ENCODE measurements at regions of chr18 and their contacts with region 1.

Region 1: DNA sequence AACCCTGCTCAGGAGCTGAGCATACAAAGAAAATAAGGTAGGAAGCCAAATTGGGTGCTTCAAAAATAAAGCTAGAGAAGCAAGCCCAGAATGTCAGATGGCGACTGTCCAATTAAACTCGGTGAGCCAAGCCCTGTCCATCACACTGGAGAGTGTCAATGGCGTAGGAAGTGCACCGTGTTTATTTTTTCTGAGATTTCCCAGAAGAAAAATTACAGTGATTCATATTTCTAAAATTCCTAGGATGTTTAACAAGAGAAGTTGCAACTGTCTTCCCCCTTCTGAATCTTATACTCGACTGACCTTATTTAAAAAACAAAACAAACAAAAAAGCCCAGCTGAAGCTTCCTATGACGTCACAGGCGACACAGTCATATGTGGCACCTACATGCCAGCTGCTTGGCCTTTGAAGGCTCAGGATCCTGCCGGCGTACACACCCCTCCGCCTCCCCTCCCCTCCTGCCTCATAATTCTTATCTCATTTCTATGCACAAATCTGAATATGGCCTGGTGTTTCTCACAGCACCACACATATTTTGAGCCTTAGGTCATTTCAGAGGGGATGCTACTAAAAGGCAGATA is 60.8 kb downstream of the MBP start:
- DNase-seq: no peak
- H3K4me3 ChIP-seq: no peak overlapping the region
- H3K27ac ChIP-seq: peak overlapping the region; percentile 10 to 27
- H3K4me1 ChIP-seq: no peaks in the 10 kb centered on the region
- H3K27me3 ChIP-seq: no peaks in the 10 kb centered on the region
- CTCF ChIP-seq: no peak
- POLR2A ChIP-seq: no peak

Region 2: GRCh38 chr18:77030201-77030600 is 41.6 kb before region 1 on chr18:
- intact Hi-C with region 1: loop called (anchors 1 kb)
- DNase-seq: no peak
- H3K4me3 ChIP-seq: no peak overlapping the region
- H3K27ac ChIP-seq: no peak overlapping the region
- H3K4me1 ChIP-seq: no peaks in the 10 kb centered on the region
- H3K27me3 ChIP-seq: no peaks in the 10 kb centered on the region
- CTCF ChIP-seq: no peak
- POLR2A ChIP-seq: no peak

Region 3: GRCh38 chr18:77049938-77050337 is 21.9 kb before region 1 on chr18:
- intact Hi-C with region 1: no loop called
- DNase-seq: no peak
- H3K4me3 ChIP-seq: no peak overlapping the region
- H3K27ac ChIP-seq: no peak overlapping the region
- H3K4me1 ChIP-seq: no peaks in the 10 kb centered on the region
- H3K27me3 ChIP-seq: no peaks in the 10 kb centered on the region
- CTCF ChIP-seq: no peak
- POLR2A ChIP-seq: no peak

Measured in breast epithelium (tissue), 4 donors.